ENCODE measurements at regions of chr13 and their contacts with region 1.

Region 1: GRCh38 chr13:21297914-21298831 is 121.7 kb downstream of the MRPL57 start:
- DNase-seq: peak; percentile 86
- ATAC-seq: peak; percentile 88
- H3K4me3 Mint-ChIP-seq: peak overlapping the region; percentile 92
- H3K27ac Mint-ChIP-seq: peak overlapping the region; percentile 93
- H3K4me1 Mint-ChIP-seq: peaks cover 26% of the 10 kb centered on the region
- H3K27me3 Mint-ChIP-seq: no peaks in the 10 kb centered on the region
- CTCF ChIP-seq: peak; percentile 67

Region 2: GRCh38 chr13:21240586-21240985 is 57.6 kb before region 1 on chr13:
- CTCF ChIA-PET with region 1: interaction called, 16 read pairs
- POLR2A ChIA-PET with region 1: no interaction called
- DNase-seq: no peak
- ATAC-seq: no peak
- H3K4me3 Mint-ChIP-seq: no peak overlapping the region
- H3K27ac Mint-ChIP-seq: no peak overlapping the region; the same call in 1 of the 2 replicates
- H3K4me1 Mint-ChIP-seq: peaks cover 3% of the 10 kb centered on the region
- H3K27me3 Mint-ChIP-seq: no peaks in the 10 kb centered on the region
- CTCF ChIP-seq: no peak

Region 3: GRCh38 chr13:21326155-21327031 is 28.2 kb after region 1 on chr13:
- CTCF ChIA-PET with region 1: interaction called, 47 read pairs
- POLR2A ChIA-PET with region 1: no interaction called
- DNase-seq: peak; percentile 86
- ATAC-seq: peak; percentile 75
- H3K4me3 Mint-ChIP-seq: peak overlapping the region; percentile 60
- H3K27ac Mint-ChIP-seq: peak overlapping the region; percentile 87
- H3K4me1 Mint-ChIP-seq: peaks cover 56% of the 10 kb centered on the region
- H3K27me3 Mint-ChIP-seq: peaks cover 34% of the 10 kb centered on the region
- CTCF ChIP-seq: no peak

Region 4: DNA sequence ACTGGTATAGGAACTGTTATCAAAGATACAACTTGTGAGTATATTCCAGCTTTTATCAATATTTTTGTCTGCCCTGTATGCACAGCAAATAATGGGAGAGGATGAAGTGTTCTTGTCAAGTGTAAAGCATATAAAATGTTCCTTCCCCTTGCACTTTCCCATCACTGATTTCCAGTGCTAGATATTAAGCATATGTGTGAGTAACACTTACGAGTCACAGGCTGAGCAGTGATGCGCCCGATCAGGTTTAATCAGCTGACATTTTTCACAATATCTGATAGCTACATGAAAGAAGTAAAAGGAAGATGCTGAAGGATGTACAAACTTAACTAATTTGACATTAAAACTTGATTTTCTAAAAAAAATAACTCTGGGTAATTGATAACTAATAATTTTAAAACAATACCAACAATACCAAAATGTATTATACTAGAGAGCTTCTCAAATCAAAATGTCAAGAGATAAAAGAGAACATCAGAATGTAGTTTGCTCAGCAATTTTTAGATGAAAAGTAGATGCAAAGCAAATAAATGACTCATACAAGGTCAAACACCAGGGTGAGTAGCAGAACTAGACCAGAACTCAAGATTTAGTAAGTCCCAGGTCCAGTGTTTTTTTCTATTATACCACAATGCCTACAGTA is 104.5 kb after region 1 on chr13:
- CTCF ChIA-PET with region 1: no interaction called
- POLR2A ChIA-PET with region 1: no interaction called
- DNase-seq: no peak
- ATAC-seq: no peak
- H3K4me3 Mint-ChIP-seq: no peak overlapping the region
- H3K27ac Mint-ChIP-seq: no peak overlapping the region
- H3K4me1 Mint-ChIP-seq: peaks cover 6% of the 10 kb centered on the region; the same call in 1 of the 2 replicates
- H3K27me3 Mint-ChIP-seq: no peaks in the 10 kb centered on the region
- CTCF ChIP-seq: no peak

Region 5: DNA sequence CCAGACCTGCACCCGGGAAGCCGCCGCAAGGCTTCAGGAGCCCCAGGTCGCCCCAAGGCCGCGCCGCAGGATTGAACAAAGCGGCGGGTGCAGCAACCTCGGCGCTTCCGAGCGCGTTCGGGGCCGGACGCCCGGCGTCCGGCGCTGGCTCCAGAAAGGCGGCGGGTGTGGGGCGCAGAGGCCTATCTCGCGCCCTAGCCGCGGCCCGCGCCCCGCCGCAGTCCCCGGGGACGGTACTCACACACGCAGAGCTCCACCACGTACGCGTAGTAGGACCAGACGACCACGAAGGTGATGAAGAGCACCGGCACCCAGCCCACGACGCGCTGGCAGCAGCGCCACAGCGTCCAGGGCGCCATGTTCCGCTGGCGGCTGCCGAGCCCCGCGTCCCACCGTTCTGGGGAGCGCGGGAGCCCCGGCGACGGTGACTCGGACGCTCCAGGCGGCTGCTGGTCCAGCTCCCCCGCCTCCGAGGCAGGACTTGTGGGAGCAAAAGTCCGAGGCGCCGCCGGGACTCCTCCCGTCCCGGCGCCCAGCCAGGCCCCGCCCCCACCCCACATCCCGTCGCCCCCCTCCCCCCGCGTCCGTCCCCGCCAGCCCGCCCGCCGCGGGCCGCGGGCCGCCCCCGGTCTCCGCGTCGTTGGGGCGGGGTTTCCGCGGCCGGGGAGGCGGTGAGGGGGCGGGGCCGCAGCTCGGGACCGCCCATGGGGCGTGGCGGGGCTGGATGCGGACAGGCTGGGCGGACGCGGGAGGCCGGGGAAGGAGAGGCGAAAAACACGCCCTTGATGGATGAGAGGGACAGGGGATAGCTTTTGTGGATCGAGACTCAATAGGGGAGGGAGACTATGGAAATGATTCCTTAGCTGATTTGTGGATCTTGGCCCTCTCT is 160.9 kb after region 1 on chr13 and contains the start of gene ZDHHC20:
- CTCF ChIA-PET with region 1: interaction called, 15 read pairs
- POLR2A ChIA-PET with region 1: no interaction called
- DNase-seq: peak; percentile 90
- ATAC-seq: peak; percentile 87
- H3K4me3 Mint-ChIP-seq: peak within 1 kb of the TSS; percentile 91
- H3K27ac Mint-ChIP-seq: peak within 1 kb of the TSS; percentile 89
- H3K4me1 Mint-ChIP-seq: peaks cover 29% of the 10 kb centered on the region
- H3K27me3 Mint-ChIP-seq: no peaks in the 10 kb centered on the region
- CTCF ChIP-seq: no peak
- total RNA-seq, gene ZDHHC20: 64.7 to 69.7 TPM (median 65.1 TPM) in 3 replicates

Measured in WTC11 (cell line).